Activated naive CD4-positive, alpha-beta T cell treated with anti-CD3 and anti-CD28 coated beads, Interleukin-2, amount 10 ng/mL, durations not matched to agents 7 days and 5 days (primary cell): ENCODE measurements at regions of chr2 and their contacts with region 1.

Region 1: DNA sequence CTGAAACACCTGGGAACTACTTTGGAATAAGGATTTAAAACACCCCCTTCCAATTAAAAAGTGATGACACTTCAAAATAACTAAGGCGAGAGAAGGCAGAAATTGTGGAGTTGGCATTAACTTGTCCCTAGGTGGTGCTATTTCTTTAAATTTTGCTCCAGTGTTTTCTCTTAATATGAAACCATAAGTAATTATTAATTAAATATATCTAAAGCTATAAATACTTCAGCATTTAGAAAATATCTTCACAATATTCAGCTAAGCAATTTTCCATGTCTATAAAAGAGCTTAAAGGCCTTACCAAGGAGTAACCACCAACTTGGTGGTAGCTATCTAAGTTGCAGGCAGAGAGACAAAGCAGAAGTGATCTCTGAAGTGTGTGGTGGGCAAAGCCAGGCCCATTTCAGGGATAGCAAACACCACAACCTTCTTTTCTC is 186.8 kb upstream of the PGAP1 start:
- DNase-seq: no peak
- H3K4me3 Mint-ChIP-seq: no peak overlapping the region
- H3K27ac Mint-ChIP-seq: no peak overlapping the region
- H3K4me1 Mint-ChIP-seq: peaks cover 15% of the 10 kb centered on the region
- H3K27me3 Mint-ChIP-seq: no peaks in the 10 kb centered on the region

Region 2: DNA sequence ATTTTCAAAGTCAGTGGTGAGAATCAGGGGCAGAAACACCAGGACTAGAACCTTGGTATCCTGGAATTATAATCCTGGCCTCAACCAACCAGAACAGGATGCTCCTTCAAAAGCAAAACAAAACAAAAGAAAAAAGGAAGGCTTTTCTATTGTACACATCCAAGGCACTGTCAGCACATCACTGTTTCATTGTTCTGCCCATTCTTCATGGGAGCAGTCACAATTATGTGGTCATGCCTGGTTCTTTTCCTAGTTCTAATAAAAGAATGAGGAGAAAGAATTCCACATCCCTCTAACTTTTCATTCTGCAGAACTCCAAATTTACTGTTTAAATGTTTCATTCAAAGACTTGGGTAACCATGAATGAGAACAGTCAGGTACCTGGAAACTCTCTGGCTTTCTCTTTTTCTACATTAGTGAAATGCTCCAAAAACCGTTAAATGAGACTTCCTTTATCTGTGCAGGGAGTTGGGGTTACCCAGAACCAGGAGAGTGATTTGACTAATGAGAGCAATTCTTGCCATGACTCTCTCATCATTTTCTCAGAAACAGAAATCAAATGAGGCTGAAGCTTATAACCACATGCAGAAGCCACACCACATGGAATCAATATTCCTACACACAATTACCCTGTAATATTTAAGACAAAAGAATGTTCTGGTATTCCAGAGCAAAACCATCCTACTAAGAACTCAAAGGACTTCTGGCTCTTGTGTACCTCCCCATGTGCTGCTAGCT is 584.6 kb before region 1 on chr2:
- CTCF ChIA-PET with region 1: no interaction called
- DNase-seq: no peak
- H3K4me3 Mint-ChIP-seq: no peak overlapping the region
- H3K27ac Mint-ChIP-seq: no peak overlapping the region
- H3K4me1 Mint-ChIP-seq: peaks cover 14% of the 10 kb centered on the region
- H3K27me3 Mint-ChIP-seq: no peaks in the 10 kb centered on the region

Region 3: GRCh38 chr2:197131558-197131855 is 18.2 kb after region 1 on chr2:
- CTCF ChIA-PET with region 1: interaction called, 22 read pairs
- DNase-seq: no peak
- H3K4me3 Mint-ChIP-seq: no peak overlapping the region
- H3K27ac Mint-ChIP-seq: peak overlapping the region; percentile 78
- H3K4me1 Mint-ChIP-seq: peaks cover 74% of the 10 kb centered on the region
- H3K27me3 Mint-ChIP-seq: no peaks in the 10 kb centered on the region

Region 4: GRCh38 chr2:197191177-197191939 is 78.1 kb after region 1 on chr2:
- CTCF ChIA-PET with region 1: interaction called, 26 read pairs
- DNase-seq: no peak
- H3K4me3 Mint-ChIP-seq: no peak overlapping the region
- H3K27ac Mint-ChIP-seq: peak overlapping the region; percentile 7
- H3K4me1 Mint-ChIP-seq: peaks cover 77% of the 10 kb centered on the region
- H3K27me3 Mint-ChIP-seq: no peaks in the 10 kb centered on the region

Region 5: DNA sequence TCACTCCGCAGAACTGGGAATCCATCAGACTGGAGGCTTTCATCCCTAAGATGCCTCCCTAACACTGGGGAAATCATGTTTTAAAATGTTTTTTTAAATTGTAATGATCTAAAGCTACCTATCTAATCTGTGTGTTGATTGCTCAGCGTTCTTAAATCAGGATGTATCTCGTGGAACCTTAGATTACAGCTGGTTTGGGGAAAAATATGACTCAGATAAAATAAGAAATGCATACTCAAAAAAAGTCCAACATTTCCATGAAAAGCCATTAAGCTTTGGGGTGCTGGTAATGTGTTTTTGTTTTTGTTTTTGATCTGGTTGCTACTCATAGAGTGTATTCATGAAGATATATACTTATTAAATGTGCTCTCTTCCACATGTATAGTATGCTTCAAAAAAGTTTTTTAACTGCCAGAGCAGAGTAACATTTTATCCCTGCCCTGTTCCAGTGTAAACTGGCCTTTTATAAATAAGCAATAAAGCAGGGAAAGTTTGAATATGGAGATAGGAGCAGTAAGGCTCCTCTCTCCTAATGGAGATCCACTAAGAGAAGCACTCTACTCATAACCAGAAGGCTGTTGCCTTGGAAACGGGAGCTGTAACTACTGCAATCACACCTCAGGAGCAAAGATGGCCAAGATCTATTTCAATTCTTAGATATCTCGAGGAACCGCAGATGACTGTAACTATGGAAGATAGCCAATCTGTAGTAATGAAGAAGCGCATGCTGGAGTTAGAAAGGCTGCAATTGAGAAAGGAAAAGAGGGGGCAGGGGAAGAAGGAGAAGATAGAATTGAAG is 155.7 kb after region 1 on chr2:
- CTCF ChIA-PET with region 1: no interaction called
- DNase-seq: no peak
- H3K4me3 Mint-ChIP-seq: no peak overlapping the region
- H3K27ac Mint-ChIP-seq: no peak overlapping the region
- H3K4me1 Mint-ChIP-seq: peaks cover 90% of the 10 kb centered on the region
- H3K27me3 Mint-ChIP-seq: no peaks in the 10 kb centered on the region

Region 6: GRCh38 chr2:197378494-197379307 is 265.4 kb after region 1 on chr2:
- CTCF ChIA-PET with region 1: interaction called, 37 read pairs
- DNase-seq: peak; percentile 71
- H3K4me3 Mint-ChIP-seq: no peak overlapping the region
- H3K27ac Mint-ChIP-seq: no peak overlapping the region
- H3K4me1 Mint-ChIP-seq: peaks cover 9% of the 10 kb centered on the region
- H3K27me3 Mint-ChIP-seq: peaks cover 19% of the 10 kb centered on the region

Region 7: GRCh38 chr2:198116756-198117155 is 1003.5 kb after region 1 on chr2:
- CTCF ChIA-PET with region 1: no interaction called
- DNase-seq: no peak
- H3K4me3 Mint-ChIP-seq: no peak overlapping the region
- H3K27ac Mint-ChIP-seq: no peak overlapping the region
- H3K4me1 Mint-ChIP-seq: no peaks in the 10 kb centered on the region
- H3K27me3 Mint-ChIP-seq: no peaks in the 10 kb centered on the region